Dorsolateral prefrontal cortex (tissue), 120 donors: ENCODE measurements at regions of chr11 and their contacts with region 1.

Region 1: GRCh38 chr11:6022956-6023355 is 7.6 kb downstream of the OR56A1 start:
- DNase-seq: peak in 1 of 10 donors; percentile 4
- H3K4me3 ChIP-seq: no peak overlapping the region
- H3K27ac ChIP-seq: no peak overlapping the region
- H3K27me3 ChIP-seq: peaks cover 0 to 20% (median 0%) of the 10 kb centered on the region in 45 donors
- CTCF ChIP-seq: peak in 55 of 56 donors; percentile 16 to 77 (median 54)

Region 2: DNA sequence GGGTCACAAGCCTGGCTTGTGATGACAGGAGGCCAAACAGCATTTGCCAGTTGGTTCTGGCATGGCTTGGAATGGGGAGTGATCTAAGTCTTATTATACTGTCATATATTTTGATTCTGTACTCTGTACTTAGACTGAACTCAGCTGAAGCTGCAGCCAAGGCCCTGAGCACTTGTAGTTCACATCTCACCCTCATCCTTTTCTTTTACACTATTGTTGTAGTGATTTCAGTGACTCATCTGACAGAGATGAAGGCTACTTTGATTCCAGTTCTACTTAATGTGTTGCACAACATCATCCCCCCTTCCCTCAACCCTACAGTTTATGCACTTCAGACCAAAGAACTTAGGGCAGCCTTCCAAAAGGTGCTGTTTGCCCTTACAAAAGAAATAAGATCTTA is 285.9 kb before region 1 on chr11:
- intact Hi-C with region 1: no loop called
- DNase-seq: no peak
- H3K4me3 ChIP-seq: no peak overlapping the region
- H3K27ac ChIP-seq: no peak overlapping the region
- H3K27me3 ChIP-seq: peaks cover 0 to 12% (median 0%) of the 10 kb centered on the region in 45 donors
- CTCF ChIP-seq: no peak

Region 3: GRCh38 chr11:5983443-5983842 is 39.5 kb before region 1 on chr11:
- intact Hi-C with region 1: no loop called
- DNase-seq: no peak
- H3K4me3 ChIP-seq: no peak overlapping the region
- H3K27ac ChIP-seq: no peak overlapping the region
- H3K27me3 ChIP-seq: peaks cover 0 to 13% (median 0%) of the 10 kb centered on the region in 45 donors
- CTCF ChIP-seq: no peak

Region 4: DNA sequence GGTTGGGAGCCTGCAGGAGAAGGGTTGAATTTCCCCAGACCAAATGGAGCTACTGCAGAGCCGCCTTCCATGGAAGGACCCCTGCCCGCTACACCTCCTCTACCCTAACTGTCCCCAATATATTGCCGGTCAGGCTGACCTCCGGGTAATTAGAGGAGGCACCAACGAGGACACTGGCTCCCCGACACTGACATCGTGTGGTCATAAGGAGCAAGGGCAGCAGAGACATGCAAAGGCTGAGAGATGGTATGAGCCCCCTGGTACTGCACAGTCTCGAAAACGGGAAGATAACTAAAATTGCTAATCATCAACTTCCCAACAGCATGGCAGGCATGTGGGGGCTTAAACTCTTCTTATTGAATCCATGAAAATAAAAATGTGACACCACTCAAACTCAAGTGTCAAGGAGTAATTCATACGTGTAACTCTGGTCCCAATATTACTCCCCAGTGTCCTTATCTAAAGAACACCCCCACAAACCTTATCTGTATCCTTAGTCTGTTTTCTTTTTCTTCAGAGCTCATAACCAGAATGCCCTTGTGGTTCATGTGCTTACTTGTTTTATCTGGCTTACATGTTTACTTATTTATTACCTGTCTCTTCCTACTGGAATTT is 293.0 kb after region 1 on chr11:
- intact Hi-C with region 1: loop called in 1 of 2 experiments (anchors 5 kb)
- DNase-seq: peak in 8 of 10 donors; percentile 35 to 70 (median 50)
- H3K4me3 ChIP-seq: peak overlapping the region in 7 of 59 donors; percentile 7 to 39 (median 25)
- H3K27ac ChIP-seq: no peak overlapping the region
- H3K27me3 ChIP-seq: peaks cover 0 to 11% (median 0%) of the 10 kb centered on the region in 45 donors
- CTCF ChIP-seq: peak; percentile 35 to 85 (median 74)

Region 5: GRCh38 chr11:6362873-6363678 is 340.1 kb after region 1 on chr11:
- intact Hi-C with region 1: loop called (anchors 5 kb)
- DNase-seq: peak; percentile 50 to 84 (median 81)
- H3K4me3 ChIP-seq: no peak overlapping the region
- H3K27ac ChIP-seq: no peak overlapping the region
- H3K27me3 ChIP-seq: no peaks in the 10 kb centered on the region
- CTCF ChIP-seq: peak in 55 of 56 donors; percentile 24 to 88 (median 81)